Naive thymus-derived CD4-positive, alpha-beta T cell (primary cell): ENCODE measurements at regions of chr7 and their contacts with region 1.

Region 1: GRCh38 chr7:134646425-134647305 is at the start of gene BPGM:
- DNase-seq: peak; percentile 81 to 100 (median 98)
- ATAC-seq: peak; percentile 97
- H3K4me3 ChIP-seq: peak within 1 kb of the TSS; percentile 88
- H3K4me3 Mint-ChIP-seq: no peak within 1 kb of the TSS
- H3K27ac ChIP-seq: peak within 1 kb of the TSS; percentile 85
- H3K27ac Mint-ChIP-seq: no peak within 1 kb of the TSS
- H3K4me1 ChIP-seq: peaks cover 19 to 35% of the 10 kb centered on the region in 2 donors
- H3K4me1 Mint-ChIP-seq: peaks cover 21 to 45% (median 38%) of the 10 kb centered on the region in 7 donors
- H3K27me3 ChIP-seq: no peaks in the 10 kb centered on the region
- H3K27me3 Mint-ChIP-seq: no peaks in the 10 kb centered on the region
- total RNA-seq, gene BPGM: 12.7 to 19.2 (median 14.2) TPM

Region 2: GRCh38 chr7:134316539-134317344 is 329.9 kb before region 1 on chr7 and contains the start of gene SLC35B4:
- CTCF ChIA-PET with region 1: no interaction called
- POLR2A ChIA-PET with region 1: no interaction called
- intact Hi-C with region 1: loop called (anchors 1 to 2 kb)
- DNase-seq: peak; percentile 79 to 95 (median 92)
- ATAC-seq: peak; percentile 99
- H3K4me3 ChIP-seq: peak within 1 kb of the TSS; percentile 79
- H3K4me3 Mint-ChIP-seq: peak within 1 kb of the TSS; percentile 88 to 97 (median 94)
- H3K27ac ChIP-seq: peak within 1 kb of the TSS; percentile 77
- H3K27ac Mint-ChIP-seq: peak within 1 kb of the TSS; percentile 81 to 93 (median 89)
- H3K4me1 ChIP-seq: peaks cover 0 to 15% of the 10 kb centered on the region in 2 donors
- H3K4me1 Mint-ChIP-seq: peaks cover 18 to 29% (median 26%) of the 10 kb centered on the region in 7 donors
- H3K27me3 ChIP-seq: no peaks in the 10 kb centered on the region
- H3K27me3 Mint-ChIP-seq: peaks cover 0 to 4% (median 0%) of the 10 kb centered on the region in 5 donors
- total RNA-seq, gene SLC35B4: 9.8 to 19.2 (median 12.2) TPM

Region 3: GRCh38 chr7:134662166-134662870 is 15.7 kb after region 1 on chr7:
- CTCF ChIA-PET with region 1: interaction called, 7 read pairs
- POLR2A ChIA-PET with region 1: interaction called, 154 read pairs
- intact Hi-C with region 1: no loop called
- DNase-seq: no peak
- ATAC-seq: no peak
- H3K4me3 ChIP-seq: no peak overlapping the region
- H3K4me3 Mint-ChIP-seq: no peak overlapping the region
- H3K27ac ChIP-seq: no peak overlapping the region
- H3K27ac Mint-ChIP-seq: peak overlapping the region in 7 of 9 donors; percentile 15 to 51 (median 44)
- H3K4me1 ChIP-seq: peaks cover 0 to under 1% of the 10 kb centered on the region in 2 donors
- H3K4me1 Mint-ChIP-seq: peaks cover 15 to 65% (median 51%) of the 10 kb centered on the region in 7 donors
- H3K27me3 ChIP-seq: no peaks in the 10 kb centered on the region
- H3K27me3 Mint-ChIP-seq: no peaks in the 10 kb centered on the region

Region 4: GRCh38 chr7:134701272-134701671 is 54.6 kb after region 1 on chr7:
- CTCF ChIA-PET with region 1: no interaction called
- POLR2A ChIA-PET with region 1: interaction called, 4 read pairs
- intact Hi-C with region 1: loop called in 1 of 2 experiments (anchors 1 kb)
- DNase-seq: peak in 6 of 9 donors; percentile 10 to 39 (median 23)
- ATAC-seq: peak; percentile 60
- H3K4me3 ChIP-seq: no peak overlapping the region
- H3K4me3 Mint-ChIP-seq: no peak overlapping the region
- H3K27ac ChIP-seq: no peak overlapping the region
- H3K27ac Mint-ChIP-seq: peak overlapping the region in 1 of 9 donors; percentile 25
- H3K4me1 ChIP-seq: no peaks in the 10 kb centered on the region
- H3K4me1 Mint-ChIP-seq: no peaks in the 10 kb centered on the region
- H3K27me3 ChIP-seq: no peaks in the 10 kb centered on the region
- H3K27me3 Mint-ChIP-seq: peaks cover 0 to 2% (median 0%) of the 10 kb centered on the region in 5 donors

Region 5: GRCh38 chr7:134986363-134987251 is 339.9 kb after region 1 on chr7 and contains the start of gene AGBL3:
- CTCF ChIA-PET with region 1: interaction called, 3 read pairs
- POLR2A ChIA-PET with region 1: interaction called, 7 read pairs
- intact Hi-C with region 1: loop called (anchors 1 kb)
- DNase-seq: peak; percentile 80 to 92 (median 89)
- ATAC-seq: peak; percentile 94
- H3K4me3 ChIP-seq: peak within 1 kb of the TSS; percentile 92
- H3K4me3 Mint-ChIP-seq: peak within 1 kb of the TSS; percentile 93 to 100 (median 98)
- H3K27ac ChIP-seq: peak within 1 kb of the TSS; percentile 96
- H3K27ac Mint-ChIP-seq: peak within 1 kb of the TSS; percentile 97 to 100 (median 99)
- H3K4me1 ChIP-seq: no peaks in the 10 kb centered on the region
- H3K4me1 Mint-ChIP-seq: peaks cover 20 to 61% (median 52%) of the 10 kb centered on the region in 7 donors
- H3K27me3 ChIP-seq: no peaks in the 10 kb centered on the region
- H3K27me3 Mint-ChIP-seq: no peaks in the 10 kb centered on the region
- total RNA-seq, gene AGBL3: 2.1 to 6.6 (median 3.8) TPM

Region 6: GRCh38 chr7:135509903-135510602 is 863.4 kb after region 1 on chr7 and contains the start of gene CNOT4:
- CTCF ChIA-PET with region 1: no interaction called
- POLR2A ChIA-PET with region 1: no interaction called
- intact Hi-C with region 1: loop called (anchors 1 to 2 kb)
- DNase-seq: peak; percentile 82 to 97 (median 92)
- ATAC-seq: peak; percentile 96
- H3K4me3 ChIP-seq: peak within 1 kb of the TSS; percentile 78
- H3K4me3 Mint-ChIP-seq: no peak within 1 kb of the TSS
- H3K27ac ChIP-seq: peak within 1 kb of the TSS; percentile 97
- H3K27ac Mint-ChIP-seq: no peak within 1 kb of the TSS
- H3K4me1 ChIP-seq: peaks cover 12 to 15% of the 10 kb centered on the region in 2 donors
- H3K4me1 Mint-ChIP-seq: peaks cover 3 to 21% (median 14%) of the 10 kb centered on the region in 7 donors
- H3K27me3 ChIP-seq: no peaks in the 10 kb centered on the region
- H3K27me3 Mint-ChIP-seq: no peaks in the 10 kb centered on the region
- total RNA-seq, gene CNOT4: 28.7 to 39.4 (median 38.3) TPM